Left cardiac atrium (tissue), 4 donors: ENCODE measurements at regions of chr5 and their contacts with region 1.

Region 1: DNA sequence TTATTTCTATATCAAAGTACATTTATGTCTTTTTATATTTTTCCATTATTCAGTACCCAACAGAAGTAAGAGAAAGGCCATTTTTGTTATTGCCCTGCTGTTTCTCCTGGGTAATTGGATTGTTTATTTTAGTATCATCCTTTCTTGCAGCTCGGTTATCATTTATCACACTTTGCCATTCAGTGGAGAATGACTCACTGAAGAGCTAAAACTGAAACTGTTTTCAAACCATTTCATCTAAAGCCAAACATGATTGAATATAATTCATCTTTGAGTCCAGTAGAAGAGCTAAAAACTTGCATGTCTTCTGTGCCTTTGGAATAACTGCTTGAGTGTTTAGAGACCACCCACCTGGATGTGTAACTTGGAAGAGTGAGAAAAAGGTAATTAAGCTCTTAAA is 139.5 kb upstream of the PRDM9 start:
- DNase-seq: no peak
- ATAC-seq: no peak

Region 2: GRCh38 chr5:22998774-22999173 is 369.1 kb before region 1 on chr5:
- intact Hi-C with region 1: no loop called
- DNase-seq: no peak
- ATAC-seq: no peak

Region 3: DNA sequence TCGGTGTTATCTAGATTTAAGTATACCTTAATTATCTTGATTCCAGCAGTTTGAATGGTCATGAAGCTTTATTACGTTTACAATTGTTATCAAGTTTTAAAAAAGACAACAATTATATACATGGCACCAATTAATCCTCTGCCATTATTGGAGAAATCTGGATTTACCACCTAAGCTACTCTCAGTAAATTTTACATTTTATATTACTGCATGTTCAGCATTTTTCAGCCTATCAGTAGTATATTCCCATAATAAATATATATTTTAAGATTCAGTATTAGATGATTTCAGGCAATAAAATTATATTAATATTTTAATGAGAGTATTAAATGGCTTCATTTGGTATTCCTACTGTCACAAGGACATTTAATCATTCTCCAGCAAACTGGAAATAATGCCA is 125.0 kb before region 1 on chr5:
- intact Hi-C with region 1: no loop called
- DNase-seq: no peak
- ATAC-seq: no peak

Region 4: GRCh38 chr5:23343121-23343520 is 24.8 kb before region 1 on chr5:
- intact Hi-C with region 1: loop called in 1 of 2 experiments (anchors 2 kb)
- DNase-seq: no peak
- ATAC-seq: no peak

Region 5: DNA sequence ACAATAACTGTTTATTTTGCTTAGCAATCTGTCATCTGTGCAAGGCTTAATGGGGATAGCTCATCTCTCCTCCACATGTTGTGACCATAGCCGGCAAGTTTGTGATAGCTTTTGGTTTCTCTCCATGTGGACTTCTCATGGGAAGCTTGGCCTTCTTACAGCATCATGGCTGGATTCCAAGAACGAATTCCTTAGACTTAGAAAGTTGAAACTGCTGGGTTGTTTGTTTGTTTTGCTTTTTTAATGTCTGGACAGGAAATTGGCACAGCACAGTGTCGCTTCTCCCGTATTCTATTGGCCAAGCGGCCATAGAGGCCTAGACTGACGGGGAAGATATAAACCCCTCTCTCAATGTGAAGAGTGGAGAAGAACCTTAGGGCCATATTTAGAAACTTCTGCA is 78.6 kb after region 1 on chr5:
- intact Hi-C with region 1: loop called in 1 of 2 experiments (anchors 10 kb)
- DNase-seq: no peak
- ATAC-seq: peak; percentile 67 to 72